Mammary epithelial cell (primary cell): ENCODE measurements at regions of chr14 and their contacts with region 1.

Region 1: DNA sequence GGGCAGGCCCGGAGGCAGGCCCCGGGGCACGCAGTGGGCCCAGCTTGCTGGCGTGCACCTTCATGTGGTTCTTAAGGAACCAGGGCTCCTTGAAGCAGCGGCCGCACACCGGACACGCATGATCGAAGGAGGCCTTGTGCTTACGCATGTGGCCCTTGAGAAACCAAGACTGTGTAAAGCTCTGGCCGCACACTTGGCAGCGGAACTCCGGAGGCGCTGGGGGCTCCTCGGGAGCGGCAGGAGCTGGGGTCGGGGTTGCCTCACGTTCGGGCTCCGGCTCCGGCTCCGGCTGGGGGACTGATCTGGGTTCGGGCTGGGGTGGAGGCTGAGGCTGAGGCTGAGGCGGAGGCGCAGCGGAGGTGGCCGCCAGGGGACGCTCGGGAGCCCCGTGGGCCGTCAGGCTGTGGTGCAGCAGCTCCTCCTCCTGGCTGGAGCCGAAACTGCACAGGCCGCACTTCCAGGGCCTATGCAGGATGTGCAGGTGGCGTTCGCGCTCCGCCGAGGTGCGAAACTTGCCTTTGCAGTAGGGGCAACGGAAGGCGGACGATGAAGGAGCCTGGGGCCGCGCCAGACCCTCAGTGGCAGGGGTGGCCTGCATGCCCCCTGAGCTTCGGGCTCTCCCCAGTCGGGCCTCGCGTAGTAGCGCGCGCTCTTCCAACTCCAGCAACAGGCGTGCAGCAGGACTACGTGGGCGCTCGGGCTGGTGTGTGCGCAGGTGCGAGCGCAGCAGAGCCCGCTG is 6.0 kb downstream of the ZNF219 start:
- DNase-seq: peak; percentile 56
- H3K4me3 ChIP-seq: no peak overlapping the region
- H3K27ac ChIP-seq: no peak overlapping the region
- H3K4me1 ChIP-seq: peaks cover 19% of the 10 kb centered on the region
- H3K27me3 ChIP-seq: no peaks in the 10 kb centered on the region
- CTCF ChIP-seq: peak; percentile 100

Region 2: DNA sequence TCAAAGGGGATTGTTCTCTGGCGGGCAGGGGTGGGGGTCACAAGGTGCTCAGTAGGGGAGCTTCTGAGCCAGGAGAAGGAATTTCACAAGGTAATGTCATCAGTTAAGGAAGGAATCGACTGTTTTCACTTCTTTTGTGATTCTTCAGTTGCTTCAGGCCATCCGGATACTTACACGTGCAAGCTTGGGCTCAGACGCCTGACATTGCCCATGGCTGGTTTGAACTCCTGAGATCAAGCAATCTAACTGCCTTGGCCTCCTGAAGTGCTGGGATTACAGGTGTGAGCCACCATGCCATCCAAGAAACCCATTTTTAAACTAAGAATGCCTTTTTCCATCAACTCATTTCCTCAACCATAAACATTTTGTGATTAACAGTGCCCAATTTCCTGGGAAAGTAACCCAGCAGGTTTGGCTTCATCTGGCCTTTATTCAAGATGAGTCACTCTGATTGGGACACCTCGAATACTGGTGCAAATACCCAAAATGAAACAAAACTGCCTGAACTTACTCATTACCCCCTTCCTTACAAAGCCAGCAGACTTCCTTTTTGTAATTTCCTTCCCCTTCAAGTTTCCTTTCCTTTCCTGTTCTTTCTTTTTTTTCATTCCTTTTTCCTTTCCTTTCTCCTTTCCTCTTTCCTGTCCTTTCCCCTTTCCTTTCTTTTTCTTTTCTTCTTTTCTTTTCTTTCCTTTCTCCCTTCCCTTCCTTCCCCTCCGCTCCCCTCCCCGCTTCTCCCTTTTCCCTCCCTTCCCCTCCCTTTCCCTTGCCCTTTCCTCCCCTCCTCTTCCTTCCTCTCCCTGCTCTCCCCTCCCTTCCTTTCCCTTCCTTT is 597.3 kb before region 1 on chr14:
- CTCF ChIA-PET with region 1: no interaction called
- dilution Hi-C with region 1: no loop called
- in situ Hi-C with region 1: no loop called
- intact Hi-C with region 1: no loop called
- DNase-seq: peak; percentile 84
- H3K4me3 ChIP-seq: no peak overlapping the region
- H3K27ac ChIP-seq: no peak overlapping the region
- H3K4me1 ChIP-seq: peaks cover 18% of the 10 kb centered on the region
- H3K27me3 ChIP-seq: no peaks in the 10 kb centered on the region
- CTCF ChIP-seq: no peak

Region 3: GRCh38 chr14:21103710-21104447 is 11.4 kb after region 1 on chr14:
- CTCF ChIA-PET with region 1: interaction called, 20 read pairs
- dilution Hi-C with region 1: no loop called
- in situ Hi-C with region 1: no loop called
- intact Hi-C with region 1: loop called (anchors 1 kb)
- DNase-seq: peak; percentile 94
- H3K4me3 ChIP-seq: peak overlapping the region; percentile 32 to 85 (median 58)
- H3K27ac ChIP-seq: peak overlapping the region; percentile 86
- H3K4me1 ChIP-seq: peaks cover 62% of the 10 kb centered on the region
- H3K27me3 ChIP-seq: no peaks in the 10 kb centered on the region
- CTCF ChIP-seq: peak; percentile 73 to 86

Region 4: GRCh38 chr14:21220874-21221477 is 128.5 kb after region 1 on chr14:
- CTCF ChIA-PET with region 1: no interaction called
- dilution Hi-C with region 1: no loop called
- in situ Hi-C with region 1: no loop called
- intact Hi-C with region 1: no loop called
- DNase-seq: no peak
- H3K4me3 ChIP-seq: no peak overlapping the region
- H3K27ac ChIP-seq: no peak overlapping the region
- H3K4me1 ChIP-seq: peaks cover 23% of the 10 kb centered on the region
- H3K27me3 ChIP-seq: no peaks in the 10 kb centered on the region
- CTCF ChIP-seq: no peak